ENCODE measurements at regions of chr1 and their contacts with region 1.

Region 1: GRCh38 chr1:161739865-161740566 is 9.6 kb upstream of the DUSP12 start:
- DNase-seq: peak in 1 of 2 donors; percentile 72
- ATAC-seq: no peak
- H3K4me3 ChIP-seq: no peak overlapping the region
- H3K27ac ChIP-seq: no peak overlapping the region
- H3K4me1 ChIP-seq: no peaks in the 10 kb centered on the region
- H3K27me3 ChIP-seq: no peaks in the 10 kb centered on the region

Region 2: DNA sequence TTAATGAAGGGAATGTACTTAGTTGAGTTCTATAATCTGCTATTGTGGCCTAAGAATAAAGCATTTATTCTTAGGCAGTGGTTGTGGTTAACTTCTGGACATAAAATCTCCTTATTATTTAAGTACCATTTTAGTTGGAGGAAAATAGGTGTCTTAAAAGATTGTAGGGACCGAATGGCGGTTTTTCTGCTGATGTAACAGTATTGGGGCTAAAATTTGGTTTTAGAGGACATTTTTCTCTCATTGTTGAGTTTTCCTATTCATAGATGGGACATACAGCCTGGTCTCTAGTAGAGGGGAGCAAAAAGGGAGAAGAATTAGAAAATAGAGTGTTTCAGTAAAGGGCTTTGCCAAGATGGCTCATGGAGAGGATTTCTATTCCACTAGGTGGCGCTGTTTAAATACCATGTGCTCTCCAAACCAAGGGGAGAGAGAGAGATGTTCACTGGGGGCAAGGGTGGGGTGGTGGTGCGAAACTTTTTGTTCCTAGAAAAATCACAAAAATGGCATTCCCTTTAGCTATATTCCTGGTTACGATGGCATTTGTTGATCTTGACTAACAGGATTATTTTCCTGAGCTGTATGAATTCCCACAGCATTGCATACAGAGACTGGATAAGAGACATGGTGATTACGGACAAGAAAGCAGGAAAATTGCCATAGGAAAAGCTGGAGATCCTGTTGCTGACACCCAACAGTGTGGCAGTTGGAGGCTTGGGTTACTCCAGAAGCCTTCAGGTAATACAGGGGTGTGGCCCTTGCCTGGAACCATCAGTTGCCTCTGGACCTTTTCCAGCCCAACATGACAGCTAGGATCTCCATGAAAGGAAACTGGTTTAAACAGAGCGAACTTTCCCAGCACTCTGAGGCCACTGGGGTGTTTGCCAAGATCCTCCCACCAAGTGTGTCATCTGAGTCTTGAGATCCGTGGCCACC is 252.9 kb before region 1 on chr1:
- intact Hi-C with region 1: loop called (anchors 5 to 10 kb)
- DNase-seq: peak; percentile 76 to 80
- ATAC-seq: peak; percentile 88
- H3K4me3 ChIP-seq: no peak overlapping the region
- H3K27ac ChIP-seq: no peak overlapping the region
- H3K4me1 ChIP-seq: no peaks in the 10 kb centered on the region
- H3K27me3 ChIP-seq: no peaks in the 10 kb centered on the region

Region 3: DNA sequence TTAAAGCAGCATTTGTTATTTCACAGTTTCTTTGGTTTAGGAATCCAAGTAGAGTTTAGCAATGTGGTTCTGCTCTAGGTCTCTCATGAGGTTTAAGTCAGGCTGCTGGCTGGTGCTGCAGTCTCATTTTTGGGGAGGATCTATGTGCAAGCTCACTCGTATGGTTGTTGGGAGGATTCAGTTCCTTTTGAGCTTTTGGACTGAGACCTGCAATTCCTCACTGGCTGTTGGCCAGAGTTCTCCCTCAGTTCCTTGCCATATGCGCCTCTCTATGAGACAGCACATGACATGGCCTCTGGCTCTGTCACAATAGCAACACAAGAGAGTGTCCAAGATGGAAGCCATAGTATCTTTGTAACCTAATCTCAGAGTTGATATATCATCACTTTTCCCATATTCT is 192.7 kb after region 1 on chr1:
- intact Hi-C with region 1: no loop called
- DNase-seq: peak in 1 of 2 donors; percentile 78
- ATAC-seq: peak; percentile 56
- H3K4me3 ChIP-seq: no peak overlapping the region
- H3K27ac ChIP-seq: no peak overlapping the region
- H3K4me1 ChIP-seq: peaks cover 0 to 8% of the 10 kb centered on the region in 2 donors
- H3K27me3 ChIP-seq: no peaks in the 10 kb centered on the region